ENCODE measurements at regions of chr12 and their contacts with region 1.

Region 1: GRCh38 chr12:61291647-61292046 is 968.6 kb upstream of the USP15 start:
- DNase-seq: no peak
- H3K4me3 ChIP-seq: no peak overlapping the region
- H3K27ac ChIP-seq: no peak overlapping the region
- H3K4me1 ChIP-seq: no peaks in the 10 kb centered on the region
- H3K27me3 ChIP-seq: no peaks in the 10 kb centered on the region
- CTCF ChIP-seq: no peak

Region 2: GRCh38 chr12:61188801-61189595 is 102.6 kb before region 1 on chr12:
- CTCF ChIA-PET with region 1: no interaction called
- POLR2A ChIA-PET with region 1: interaction called, 10 read pairs
- intact Hi-C with region 1: no loop called
- DNase-seq: no peak
- H3K4me3 ChIP-seq: no peak overlapping the region
- H3K27ac ChIP-seq: no peak overlapping the region
- H3K4me1 ChIP-seq: no peaks in the 10 kb centered on the region
- H3K27me3 ChIP-seq: no peaks in the 10 kb centered on the region
- CTCF ChIP-seq: no peak

Region 3: DNA sequence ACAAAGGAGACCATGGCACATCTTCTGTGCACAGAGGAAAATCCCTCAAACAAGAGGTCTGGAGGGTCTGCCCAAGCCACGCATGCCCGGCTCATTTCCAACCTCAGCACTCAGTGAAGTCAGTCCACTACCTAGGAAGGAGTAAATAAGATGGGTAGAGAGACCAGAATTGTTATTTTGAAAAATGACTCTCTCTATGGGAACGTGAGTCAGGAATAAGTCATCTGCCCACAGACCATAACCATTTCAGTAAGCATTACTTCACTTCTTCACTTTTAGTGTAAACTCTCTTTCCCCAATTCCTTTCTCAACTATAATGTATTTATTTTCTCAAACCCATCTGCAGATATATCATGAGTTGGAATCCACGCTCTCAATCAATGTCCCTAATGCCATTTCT is 71.3 kb before region 1 on chr12:
- CTCF ChIA-PET with region 1: no interaction called
- POLR2A ChIA-PET with region 1: no interaction called
- intact Hi-C with region 1: no loop called
- DNase-seq: no peak
- H3K4me3 ChIP-seq: no peak overlapping the region
- H3K27ac ChIP-seq: no peak overlapping the region
- H3K4me1 ChIP-seq: no peaks in the 10 kb centered on the region
- H3K27me3 ChIP-seq: no peaks in the 10 kb centered on the region
- CTCF ChIP-seq: no peak